Psoas muscle (tissue), 8 donors: ENCODE measurements at regions of chr10 and their contacts with region 1.

Region 1: GRCh38 chr10:29857843-29858701 is 201.3 kb downstream of the JCAD start:
- DNase-seq: peak; percentile 70 to 86
- ATAC-seq: peak; percentile 80 to 87 (median 83)
- H3K4me3 ChIP-seq: peak overlapping the region; percentile 22
- H3K27ac ChIP-seq: peak overlapping the region; percentile 84
- H3K4me1 ChIP-seq: peaks cover 50% of the 10 kb centered on the region
- H3K27me3 ChIP-seq: no peaks in the 10 kb centered on the region
- CTCF ChIP-seq: peak; percentile 68

Region 2: DNA sequence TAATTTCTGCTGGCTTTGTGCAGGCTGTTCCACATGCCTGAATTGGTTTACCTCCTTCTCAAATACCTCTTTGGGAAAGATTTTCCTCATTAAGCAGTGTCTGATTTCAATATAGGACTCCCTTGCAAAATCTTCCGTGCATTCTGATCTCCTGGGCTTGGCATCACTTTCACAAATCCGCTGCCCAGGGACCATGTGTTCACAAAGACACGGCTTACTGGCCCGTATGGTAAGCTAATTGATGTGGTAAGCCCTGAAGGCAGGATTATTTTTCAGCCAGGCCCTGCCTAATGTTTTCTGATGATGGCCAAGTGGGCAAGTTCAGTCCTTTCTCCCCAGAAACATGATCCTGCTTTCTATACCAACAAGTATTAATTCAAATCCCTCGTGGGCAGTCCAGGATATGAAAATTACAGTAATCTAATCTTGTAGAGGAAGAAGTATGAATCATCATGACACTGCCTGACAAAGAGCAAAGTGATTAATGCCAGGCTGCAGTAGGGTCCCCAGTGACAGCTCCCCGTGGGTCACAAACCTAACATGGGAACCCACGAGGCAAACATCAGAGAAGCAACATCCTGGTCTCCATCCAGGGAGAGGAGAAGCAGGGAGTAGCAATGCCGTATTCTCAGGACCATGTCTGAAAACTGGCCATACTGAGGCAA is 211.7 kb before region 1 on chr10:
- intact Hi-C with region 1: loop called in 1 of 2 experiments (anchors 10 kb)
- DNase-seq: peak in 1 of 2 donors; percentile 51
- ATAC-seq: peak; percentile 45 to 54 (median 49)
- H3K4me3 ChIP-seq: peak overlapping the region; percentile 25
- H3K27ac ChIP-seq: peak overlapping the region; percentile 94
- H3K4me1 ChIP-seq: peaks cover 67% of the 10 kb centered on the region
- H3K27me3 ChIP-seq: no peaks in the 10 kb centered on the region
- CTCF ChIP-seq: no peak

Region 3: DNA sequence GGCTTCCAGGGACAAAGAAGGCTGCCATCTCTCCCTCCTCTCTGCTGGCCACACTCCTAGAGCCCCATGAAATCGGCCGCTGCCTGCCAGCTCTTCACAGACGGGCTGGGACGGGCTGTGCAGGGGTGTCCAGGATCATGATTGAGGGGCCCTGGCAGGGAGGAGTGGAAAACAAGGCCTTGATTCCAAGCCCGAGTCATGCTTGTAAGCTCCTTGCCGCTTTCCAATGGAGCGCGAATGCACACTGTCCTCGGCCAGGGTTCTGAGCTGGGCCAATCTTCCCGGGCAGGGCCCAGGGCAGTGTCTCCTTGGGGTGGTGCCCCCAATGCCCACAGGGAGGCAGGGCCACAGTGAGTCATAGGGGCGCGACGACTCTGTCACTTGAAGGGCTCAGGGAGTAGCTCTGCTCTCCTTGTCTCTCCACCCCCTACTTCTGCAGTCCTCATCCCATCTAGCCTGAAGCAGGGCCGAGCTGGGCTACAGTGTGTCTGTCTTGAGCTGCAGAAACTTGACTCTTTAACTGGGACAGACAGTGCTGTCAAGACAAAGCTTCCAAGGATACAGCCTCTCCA is 37.1 kb before region 1 on chr10:
- intact Hi-C with region 1: loop called in 1 of 2 experiments (anchors 5 kb)
- DNase-seq: peak; percentile 66 to 84
- ATAC-seq: peak; percentile 88 to 92 (median 91)
- H3K4me3 ChIP-seq: peak overlapping the region; percentile 50
- H3K27ac ChIP-seq: peak overlapping the region; percentile 82
- H3K4me1 ChIP-seq: peaks cover 4% of the 10 kb centered on the region
- H3K27me3 ChIP-seq: peaks cover 0 to 1% (median 0%) of the 10 kb centered on the region in 3 donors
- CTCF ChIP-seq: no peak

Region 4: DNA sequence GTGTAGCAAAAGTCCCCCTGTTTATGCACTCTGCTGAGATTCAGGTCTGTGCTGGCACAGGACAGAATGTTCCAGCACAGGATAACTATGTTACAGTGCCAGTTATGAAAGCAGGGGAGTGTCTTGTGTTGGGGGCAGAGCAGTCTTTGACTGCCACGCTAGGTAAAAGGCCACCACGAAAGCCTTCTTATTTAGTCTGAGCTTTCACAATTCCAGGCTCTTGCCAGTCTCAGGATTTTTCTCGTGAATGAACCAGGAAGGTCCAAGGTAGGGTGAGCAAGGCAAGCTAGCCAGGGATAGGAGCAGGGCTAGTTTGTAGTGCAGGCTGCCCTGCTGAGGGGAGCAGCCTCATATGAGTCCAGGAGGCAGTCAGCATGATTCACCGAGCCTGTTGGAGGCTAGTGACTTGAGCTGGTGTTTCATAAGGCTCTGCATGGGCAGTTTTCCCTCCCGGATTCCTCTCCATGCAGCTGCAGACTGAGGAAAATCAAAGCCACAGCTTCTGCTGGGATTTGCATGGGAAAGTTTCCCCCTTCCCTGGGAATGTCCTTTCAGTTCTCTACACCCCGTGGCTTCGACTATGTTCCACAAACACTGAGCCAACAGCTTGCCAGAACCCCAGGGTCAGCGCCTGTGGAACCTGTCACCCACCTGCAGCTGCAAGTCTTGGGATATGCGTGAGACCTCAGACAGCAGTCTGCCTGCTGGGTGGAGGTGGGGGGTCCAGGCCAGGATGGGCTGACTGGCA is 89.1 kb after region 1 on chr10:
- intact Hi-C with region 1: loop called in 1 of 2 experiments (anchors 5 kb)
- DNase-seq: peak; percentile 70 to 84
- ATAC-seq: peak; percentile 87 to 92 (median 90)
- H3K4me3 ChIP-seq: peak overlapping the region; percentile 43
- H3K27ac ChIP-seq: peak overlapping the region; percentile 96
- H3K4me1 ChIP-seq: peaks cover 49% of the 10 kb centered on the region
- H3K27me3 ChIP-seq: no peaks in the 10 kb centered on the region
- CTCF ChIP-seq: no peak